A549 (cell line): ENCODE measurements at regions of chr11 and their contacts with region 1.

Region 1: DNA sequence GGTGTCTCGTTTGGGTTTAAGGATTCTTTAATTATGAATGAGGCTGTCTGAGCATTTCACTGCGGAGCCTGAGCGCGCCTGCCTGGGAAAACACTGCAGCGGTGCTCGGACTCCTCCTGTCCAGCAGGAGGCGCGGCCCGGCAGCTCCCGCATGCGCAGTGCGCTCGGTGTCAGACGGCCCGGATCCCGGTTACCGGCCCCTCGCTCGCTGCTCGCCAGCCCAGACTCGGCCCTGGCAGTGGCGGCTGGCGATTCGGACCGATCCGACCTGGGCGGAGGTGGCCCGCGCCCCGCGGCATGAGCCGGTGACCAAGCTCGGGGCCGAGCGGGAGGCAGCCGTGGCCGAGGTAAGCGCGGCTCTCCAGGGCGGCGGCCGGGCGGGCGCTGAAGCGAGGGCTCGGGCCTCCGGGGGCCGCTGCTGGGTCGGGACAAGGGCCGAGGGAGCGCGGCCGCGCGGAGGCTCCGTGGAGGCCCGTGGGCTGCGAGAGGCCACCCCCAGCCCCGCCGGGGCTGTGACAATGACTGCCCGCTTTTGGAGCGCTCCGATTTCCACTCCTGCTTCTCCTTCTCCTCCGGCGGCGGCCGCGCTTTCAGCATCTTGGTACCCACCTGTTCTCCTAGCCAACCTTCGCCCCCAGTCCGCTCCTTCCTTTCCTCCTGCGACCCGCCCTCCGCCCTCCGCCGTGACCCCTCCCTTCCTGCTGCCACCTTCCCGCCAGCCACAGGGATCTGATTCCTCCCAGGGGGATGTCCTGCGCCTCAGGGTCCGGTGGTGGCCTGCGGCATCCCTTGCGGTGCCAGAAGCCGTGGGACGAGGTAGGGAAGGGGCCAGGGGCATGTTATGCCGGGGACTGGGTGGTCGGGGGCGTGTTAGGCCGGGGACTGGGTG is at the start of gene EXT2:
- DNase-seq: peak; percentile 85 to 92
- ATAC-seq: peak; percentile 95 to 96
- H3K4me3 ChIP-seq: peak within 1 kb of the TSS; percentile 75
- H3K27ac ChIP-seq: peak within 1 kb of the TSS; percentile 79 to 94
- H3K4me1 ChIP-seq: peaks cover 13% of the 10 kb centered on the region
- CTCF ChIP-seq: peak; percentile 61; the same call in 2 of the 3 replicates
- EP300 ChIP-seq: no peak
- POLR2A ChIP-seq: peak; percentile 68
- RAD21 ChIP-seq: no peak
- polyA plus RNA-seq, gene EXT2: 77.3 and 82.5 TPM in 2 replicates

Region 2: DNA sequence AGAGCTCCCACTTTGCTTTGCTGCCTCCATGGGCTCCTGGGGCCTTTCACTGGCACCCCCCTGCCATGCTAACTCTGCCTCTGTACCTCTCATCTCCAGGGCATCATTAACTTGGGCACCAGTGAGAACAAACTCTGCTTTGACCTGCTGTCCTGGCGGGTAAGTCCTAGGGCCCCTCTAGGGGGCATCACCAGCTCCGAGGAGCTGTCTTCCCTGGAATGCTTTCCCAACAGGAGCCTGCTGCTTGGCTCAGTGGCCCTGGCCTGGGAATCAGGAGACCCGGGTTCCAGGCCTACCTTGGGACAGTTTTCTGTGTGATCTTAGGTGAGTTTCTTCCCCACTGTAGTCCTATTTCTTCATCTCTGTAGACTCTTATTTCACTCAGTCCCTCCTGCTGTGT is 24.6 kb before region 1 on chr11:
- CTCF ChIA-PET with region 1: interaction called, 11 read pairs
- POLR2A ChIA-PET with region 1: interaction called, 5 read pairs
- DNase-seq: no peak
- ATAC-seq: no peak
- H3K4me3 ChIP-seq: no peak overlapping the region
- H3K27ac ChIP-seq: no peak overlapping the region
- H3K4me1 ChIP-seq: peaks cover 7% of the 10 kb centered on the region; the same call in 1 of the 3 replicates
- CTCF ChIP-seq: no peak
- EP300 ChIP-seq: no peak
- POLR2A ChIP-seq: no peak
- RAD21 ChIP-seq: no peak

Region 3: GRCh38 chr11:44083906-44084305 is 11.8 kb before region 1 on chr11:
- CTCF ChIA-PET with region 1: interaction called, 47 read pairs
- POLR2A ChIA-PET with region 1: no interaction called
- DNase-seq: no peak
- ATAC-seq: no peak
- H3K4me3 ChIP-seq: no peak overlapping the region
- H3K27ac ChIP-seq: no peak overlapping the region
- H3K4me1 ChIP-seq: no peaks in the 10 kb centered on the region
- CTCF ChIP-seq: no peak
- EP300 ChIP-seq: no peak
- POLR2A ChIP-seq: no peak
- RAD21 ChIP-seq: no peak

Region 4: GRCh38 chr11:44110231-44110679 is 14.5 kb after region 1 on chr11:
- CTCF ChIA-PET with region 1: interaction called, 79 read pairs
- POLR2A ChIA-PET with region 1: no interaction called
- DNase-seq: peak; percentile 49 to 72
- ATAC-seq: peak; percentile 93 to 96
- H3K4me3 ChIP-seq: no peak overlapping the region
- H3K27ac ChIP-seq: no peak overlapping the region
- H3K4me1 ChIP-seq: no peaks in the 10 kb centered on the region
- CTCF ChIP-seq: peak; percentile 81
- EP300 ChIP-seq: no peak
- POLR2A ChIP-seq: no peak
- RAD21 ChIP-seq: peak; percentile 76 to 79

Region 5: DNA sequence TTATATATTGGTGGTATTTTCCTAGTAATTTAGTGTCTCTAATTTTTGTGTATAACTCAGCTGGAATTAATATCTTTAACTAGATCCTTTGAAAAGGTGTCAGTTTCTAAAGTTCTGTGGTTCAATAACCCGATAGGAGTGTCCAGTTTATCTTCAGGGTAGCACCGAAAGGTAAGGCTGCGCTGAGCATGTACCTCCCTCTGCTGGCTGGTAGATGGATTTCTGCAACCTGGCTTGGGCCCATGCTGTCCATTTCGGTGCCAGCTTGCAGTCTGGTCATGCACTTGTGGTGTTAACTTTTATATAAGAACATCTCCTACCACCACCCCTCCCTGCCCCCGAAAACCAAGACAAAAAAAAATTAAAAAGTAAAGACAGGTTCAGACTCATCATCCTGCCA is 24.4 kb after region 1 on chr11:
- CTCF ChIA-PET with region 1: interaction called, 23 read pairs
- POLR2A ChIA-PET with region 1: no interaction called
- DNase-seq: peak; percentile 18 to 39
- ATAC-seq: peak; percentile 76 to 86; a peak in 4 of 6 replicates
- H3K4me3 ChIP-seq: no peak overlapping the region
- H3K27ac ChIP-seq: no peak overlapping the region
- H3K4me1 ChIP-seq: no peaks in the 10 kb centered on the region
- CTCF ChIP-seq: no peak
- EP300 ChIP-seq: no peak
- POLR2A ChIP-seq: no peak
- RAD21 ChIP-seq: 0 out of 5 replicates have a peak, but pooled peaks of 1 of the 2 experiments have one; percentile 19

Region 6: GRCh38 chr11:44282620-44283019 is 186.9 kb after region 1 on chr11:
- CTCF ChIA-PET with region 1: no interaction called
- POLR2A ChIA-PET with region 1: no interaction called
- DNase-seq: no peak
- ATAC-seq: no peak
- H3K4me3 ChIP-seq: no peak overlapping the region
- H3K27ac ChIP-seq: no peak overlapping the region
- H3K4me1 ChIP-seq: peaks cover 16% of the 10 kb centered on the region
- CTCF ChIP-seq: no peak
- EP300 ChIP-seq: no peak
- POLR2A ChIP-seq: no peak
- RAD21 ChIP-seq: no peak

Region 7: GRCh38 chr11:44538375-44539054 is 442.8 kb after region 1 on chr11:
- CTCF ChIA-PET with region 1: interaction called, 19 read pairs
- POLR2A ChIA-PET with region 1: no interaction called
- DNase-seq: peak; percentile 69 to 91
- ATAC-seq: peak; percentile 88 to 99
- H3K4me3 ChIP-seq: no peak overlapping the region
- H3K27ac ChIP-seq: peak overlapping the region in 1 of 2 experiments; percentile 69; a peak in 3 of 6 replicates
- H3K4me1 ChIP-seq: no peaks in the 10 kb centered on the region
- CTCF ChIP-seq: peak; percentile 88
- EP300 ChIP-seq: no peak
- POLR2A ChIP-seq: no peak
- RAD21 ChIP-seq: peak; percentile 97